Naive thymus-derived CD4-positive, alpha-beta T cell (primary cell): ENCODE measurements at regions of chr5 and their contacts with region 1.

Region 1: GRCh38 chr5:1167728-1168709 is 33.4 kb upstream of the SLC6A19 start:
- DNase-seq: peak; percentile 51 to 79 (median 71)
- ATAC-seq: peak; percentile 81
- H3K4me3 ChIP-seq: no peak overlapping the region
- H3K4me3 Mint-ChIP-seq: peak overlapping the region; percentile 58 to 85 (median 79)
- H3K27ac ChIP-seq: no peak overlapping the region
- H3K27ac Mint-ChIP-seq: no peak overlapping the region
- H3K4me1 ChIP-seq: no peaks in the 10 kb centered on the region
- H3K4me1 Mint-ChIP-seq: peaks cover 6 to 18% (median 12%) of the 10 kb centered on the region in 7 donors
- H3K27me3 ChIP-seq: no peaks in the 10 kb centered on the region
- H3K27me3 Mint-ChIP-seq: peaks cover 2 to 22% (median 11%) of the 10 kb centered on the region in 5 donors

Region 2: GRCh38 chr5:923281-923873 is 244.6 kb before region 1 on chr5:
- CTCF ChIA-PET with region 1: no interaction called
- POLR2A ChIA-PET with region 1: no interaction called
- intact Hi-C with region 1: loop called in 1 of 2 experiments (anchors 1 kb)
- DNase-seq: peak; percentile 41 to 79 (median 64)
- ATAC-seq: peak; percentile 87
- H3K4me3 ChIP-seq: no peak overlapping the region
- H3K4me3 Mint-ChIP-seq: no peak overlapping the region
- H3K27ac ChIP-seq: no peak overlapping the region
- H3K27ac Mint-ChIP-seq: no peak overlapping the region
- H3K4me1 ChIP-seq: no peaks in the 10 kb centered on the region
- H3K4me1 Mint-ChIP-seq: peaks cover 6 to 15% (median 11%) of the 10 kb centered on the region in 7 donors
- H3K27me3 ChIP-seq: no peaks in the 10 kb centered on the region
- H3K27me3 Mint-ChIP-seq: peaks cover 21 to 43% (median 33%) of the 10 kb centered on the region in 5 donors

Region 3: GRCh38 chr5:1052641-1053390 is 115.2 kb before region 1 on chr5:
- CTCF ChIA-PET with region 1: no interaction called
- POLR2A ChIA-PET with region 1: no interaction called
- intact Hi-C with region 1: no loop called
- DNase-seq: no peak
- ATAC-seq: no peak
- H3K4me3 ChIP-seq: no peak overlapping the region
- H3K4me3 Mint-ChIP-seq: no peak overlapping the region
- H3K27ac ChIP-seq: no peak overlapping the region
- H3K27ac Mint-ChIP-seq: no peak overlapping the region
- H3K4me1 ChIP-seq: no peaks in the 10 kb centered on the region
- H3K4me1 Mint-ChIP-seq: peaks cover 0 to 4% (median 0%) of the 10 kb centered on the region in 7 donors
- H3K27me3 ChIP-seq: no peaks in the 10 kb centered on the region
- H3K27me3 Mint-ChIP-seq: no peaks in the 10 kb centered on the region

Region 4: GRCh38 chr5:1594357-1595106 is 426.5 kb after region 1 on chr5:
- CTCF ChIA-PET with region 1: no interaction called
- POLR2A ChIA-PET with region 1: no interaction called
- intact Hi-C with region 1: loop called in 1 of 2 experiments (anchors 1 kb)
- DNase-seq: peak; percentile 10 to 75 (median 64)
- ATAC-seq: peak; percentile 91
- H3K4me3 ChIP-seq: peak overlapping the region; percentile 71
- H3K4me3 Mint-ChIP-seq: peak overlapping the region; percentile 53 to 86 (median 78)
- H3K27ac ChIP-seq: peak overlapping the region; percentile 58
- H3K27ac Mint-ChIP-seq: peak overlapping the region in 3 of 9 donors; percentile 54 to 81 (median 77)
- H3K4me1 ChIP-seq: no peaks in the 10 kb centered on the region
- H3K4me1 Mint-ChIP-seq: peaks cover 0 to 16% (median 8%) of the 10 kb centered on the region in 7 donors
- H3K27me3 ChIP-seq: no peaks in the 10 kb centered on the region
- H3K27me3 Mint-ChIP-seq: peaks cover 0 to 3% (median 0%) of the 10 kb centered on the region in 5 donors

Region 5: GRCh38 chr5:1652596-1653345 is 484.8 kb after region 1 on chr5:
- CTCF ChIA-PET with region 1: interaction called, 3 read pairs
- POLR2A ChIA-PET with region 1: no interaction called
- intact Hi-C with region 1: loop called in 1 of 2 experiments (anchors 2 kb)
- DNase-seq: no peak
- ATAC-seq: no peak
- H3K4me3 ChIP-seq: no peak overlapping the region
- H3K4me3 Mint-ChIP-seq: peak overlapping the region in 7 of 10 donors; percentile 40 to 81 (median 69)
- H3K27ac ChIP-seq: no peak overlapping the region
- H3K27ac Mint-ChIP-seq: no peak overlapping the region
- H3K4me1 ChIP-seq: peaks cover 0 to 7% of the 10 kb centered on the region in 2 donors
- H3K4me1 Mint-ChIP-seq: peaks cover 0 to 8% (median 4%) of the 10 kb centered on the region in 7 donors
- H3K27me3 ChIP-seq: peaks cover 0 to 5% of the 10 kb centered on the region in 2 donors
- H3K27me3 Mint-ChIP-seq: peaks cover 28 to 43% (median 35%) of the 10 kb centered on the region in 5 donors